ENCODE measurements at regions of chr13 and their contacts with region 1.

Region 1: DNA sequence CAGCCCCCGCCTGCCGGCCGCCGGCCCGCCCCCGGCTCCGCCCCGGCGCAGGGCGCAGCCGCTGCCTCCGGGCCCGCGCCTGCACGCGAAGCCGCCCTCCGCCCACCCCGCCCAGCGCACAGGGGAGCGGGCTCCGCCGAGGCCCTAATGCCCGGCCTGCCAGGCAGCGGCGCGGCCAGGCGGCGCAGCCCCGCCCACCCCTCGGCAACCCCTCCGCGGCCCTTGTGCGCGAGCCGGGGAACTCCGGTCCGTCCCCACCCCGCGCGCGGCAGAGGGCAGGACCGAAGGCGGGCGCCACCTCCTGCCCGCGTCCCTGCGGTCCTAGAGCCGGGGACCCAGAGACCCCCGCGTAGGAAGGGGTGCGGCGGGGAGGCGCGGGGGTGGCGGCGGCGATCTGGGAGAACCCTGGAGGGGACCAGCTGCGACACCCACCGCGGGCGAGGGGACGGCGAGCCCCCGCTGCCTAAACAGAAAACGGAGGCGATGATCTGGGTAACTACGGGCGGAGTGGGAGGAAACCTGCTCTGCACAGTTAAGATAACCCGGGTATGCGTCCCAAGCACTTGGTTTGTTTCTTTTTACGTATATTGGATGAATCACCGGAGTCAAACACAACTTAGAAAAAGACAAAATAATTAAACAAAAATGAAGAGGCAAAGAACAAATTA is 350 bp upstream of the USP12 start:
- DNase-seq: peak; percentile 93 to 96 (median 95)
- ATAC-seq: peak; percentile 93 to 99 (median 96)
- H3K4me3 ChIP-seq: peak overlapping the region; percentile 22 to 93 (median 75)
- H3K27ac ChIP-seq: peak overlapping the region; percentile 76 to 99 (median 93)
- H3K4me1 ChIP-seq: peaks cover 8 to 54% (median 35%) of the 10 kb centered on the region in 12 donors
- H3K27me3 ChIP-seq: no peaks in the 10 kb centered on the region
- CTCF ChIP-seq: peak in 7 of 12 donors; percentile 16 to 48 (median 28)
- POLR2A ChIP-seq: no peak

Region 2: GRCh38 chr13:27065582-27065981 is 106.4 kb before region 1 on chr13:
- intact Hi-C with region 1: loop called in 1 of 10 experiments (anchors 10 kb)
- DNase-seq: no peak
- ATAC-seq: no peak
- H3K4me3 ChIP-seq: no peak overlapping the region
- H3K27ac ChIP-seq: no peak overlapping the region
- H3K4me1 ChIP-seq: peaks cover 0 to 14% (median 9%) of the 10 kb centered on the region in 12 donors
- H3K27me3 ChIP-seq: no peaks in the 10 kb centered on the region
- CTCF ChIP-seq: no peak
- POLR2A ChIP-seq: no peak

Region 3: GRCh38 chr13:27125357-27126282 is 46.3 kb before region 1 on chr13:
- intact Hi-C with region 1: loop called in 1 of 10 experiments (anchors 5 kb)
- DNase-seq: peak in 1 of 5 donors; percentile 43
- ATAC-seq: peak in 2 of 4 donors; percentile 25 to 71
- H3K4me3 ChIP-seq: no peak overlapping the region
- H3K27ac ChIP-seq: peak overlapping the region in 1 of 12 donors; percentile 29
- H3K4me1 ChIP-seq: peaks cover 2 to 38% (median 27%) of the 10 kb centered on the region in 12 donors
- H3K27me3 ChIP-seq: no peaks in the 10 kb centered on the region
- CTCF ChIP-seq: no peak
- POLR2A ChIP-seq: no peak

Region 4: DNA sequence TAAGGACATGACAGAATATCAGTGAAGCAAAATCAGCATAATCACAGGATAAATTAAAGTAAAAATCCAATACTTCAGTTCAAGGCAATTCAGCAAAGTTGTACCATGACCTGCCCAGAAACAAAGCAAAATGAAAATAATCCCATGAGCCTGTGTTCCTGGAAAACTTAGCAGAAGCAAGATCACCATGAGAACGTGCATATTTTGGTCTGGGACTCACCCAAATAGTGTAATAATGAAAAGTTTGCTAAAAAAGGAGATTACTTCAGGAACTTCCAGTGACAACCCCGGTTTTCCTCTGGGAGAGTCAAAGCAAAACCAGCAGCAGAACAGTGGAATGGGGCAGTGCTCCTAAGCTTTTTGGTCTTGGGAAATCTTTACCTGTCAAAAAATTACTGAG is 64.5 kb after region 1 on chr13:
- intact Hi-C with region 1: no loop called
- DNase-seq: no peak
- ATAC-seq: no peak
- H3K4me3 ChIP-seq: no peak overlapping the region
- H3K27ac ChIP-seq: no peak overlapping the region
- H3K4me1 ChIP-seq: no peaks in the 10 kb centered on the region
- H3K27me3 ChIP-seq: no peaks in the 10 kb centered on the region
- CTCF ChIP-seq: no peak
- POLR2A ChIP-seq: no peak

Region 5: DNA sequence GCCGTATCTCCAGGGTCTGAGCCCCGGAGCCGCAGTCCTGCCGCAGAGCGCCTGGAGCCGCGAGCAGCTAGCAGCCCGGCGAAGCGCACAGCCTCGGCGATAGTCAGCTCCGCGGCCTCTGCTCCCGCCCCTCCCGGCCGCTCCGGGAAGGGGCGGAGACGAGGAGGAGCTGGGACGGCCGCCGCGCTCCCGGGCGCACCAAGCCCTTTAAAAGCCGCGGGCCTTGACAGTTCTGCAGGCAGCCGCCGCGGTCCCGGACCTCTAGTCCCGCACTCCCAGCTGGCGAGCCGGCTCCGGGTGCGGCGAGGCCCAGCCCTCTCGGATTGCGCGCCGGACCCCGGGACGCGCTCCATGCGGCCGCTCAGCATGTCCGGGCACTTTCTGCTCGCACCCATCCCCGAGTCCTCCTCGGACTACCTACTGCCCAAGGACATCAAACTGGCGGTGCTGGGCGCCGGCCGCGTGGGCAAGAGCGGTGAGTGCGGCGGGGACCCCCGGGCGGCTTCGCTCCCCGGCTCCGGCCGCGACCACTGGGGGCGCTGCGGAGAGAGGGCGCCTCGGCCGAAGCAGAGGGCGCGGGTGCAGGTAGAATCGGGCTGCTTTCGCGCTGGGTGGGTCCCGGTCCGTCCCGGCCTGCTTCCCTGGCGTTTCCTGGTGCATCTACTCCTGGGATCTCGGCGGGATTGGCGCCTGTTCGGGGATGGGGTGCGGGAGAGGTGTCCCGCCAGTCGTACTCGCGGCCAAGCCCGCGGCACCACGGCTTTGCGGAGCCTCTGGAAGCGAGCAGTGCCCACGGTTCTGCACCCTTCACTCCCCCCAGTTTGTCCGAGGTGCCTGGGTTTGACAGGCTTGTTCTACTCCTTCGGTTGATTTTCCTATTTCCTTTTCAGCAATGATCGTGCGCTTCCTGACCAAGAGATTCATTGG is 98.9 kb after region 1 on chr13 and contains the start of gene RASL11A:
- intact Hi-C with region 1: loop called in 1 of 10 experiments (anchors 5 kb)
- DNase-seq: peak; percentile 87 to 94 (median 88)
- ATAC-seq: peak; percentile 77 to 95 (median 92)
- H3K4me3 ChIP-seq: peak within 1 kb of the TSS; percentile 49 to 96 (median 90)
- H3K27ac ChIP-seq: peak within 1 kb of the TSS; percentile 72 to 97 (median 90)
- H3K4me1 ChIP-seq: peaks cover 0 to 53% (median 26%) of the 10 kb centered on the region in 12 donors
- H3K27me3 ChIP-seq: peaks cover 0 to 9% (median 0%) of the 10 kb centered on the region in 9 donors
- CTCF ChIP-seq: peak; percentile 84 to 99 (median 95)
- POLR2A ChIP-seq: peak in 1 of 2 donors; percentile 92
- total RNA-seq, gene RASL11A: 2.9 to 13.7 (median 5.4) TPM

Region 6: GRCh38 chr13:27770809-27771208 is 598.8 kb after region 1 on chr13:
- intact Hi-C with region 1: no loop called
- DNase-seq: no peak
- ATAC-seq: no peak
- H3K4me3 ChIP-seq: no peak overlapping the region
- H3K27ac ChIP-seq: no peak overlapping the region
- H3K4me1 ChIP-seq: no peaks in the 10 kb centered on the region
- H3K27me3 ChIP-seq: peaks cover 0 to 37% (median 7%) of the 10 kb centered on the region in 9 donors
- CTCF ChIP-seq: peak in 4 of 12 donors; percentile 14 to 28 (median 18)
- POLR2A ChIP-seq: no peak